ENCODE measurements at regions of chr5 and their contacts with region 1.

Region 1: GRCh38 chr5:14727428-14727865 is 62.9 kb downstream of the OTULIN start:
- DNase-seq: peak; percentile 75
- ATAC-seq: peak; percentile 70
- H3K4me3 Mint-ChIP-seq: no peak overlapping the region
- H3K27ac Mint-ChIP-seq: no peak overlapping the region
- H3K4me1 Mint-ChIP-seq: peaks cover 6% of the 10 kb centered on the region
- H3K27me3 Mint-ChIP-seq: no peaks in the 10 kb centered on the region
- CTCF ChIP-seq: peak; percentile 91

Region 2: GRCh38 chr5:14706615-14707021 is 20.8 kb before region 1 on chr5:
- CTCF ChIA-PET with region 1: interaction called, 28 read pairs
- POLR2A ChIA-PET with region 1: no interaction called
- intact Hi-C with region 1: no loop called
- DNase-seq: peak; percentile 33
- ATAC-seq: peak; percentile 91
- H3K4me3 Mint-ChIP-seq: peak overlapping the region; percentile 46
- H3K27ac Mint-ChIP-seq: peak overlapping the region; percentile 97
- H3K4me1 Mint-ChIP-seq: peaks cover 68% of the 10 kb centered on the region
- H3K27me3 Mint-ChIP-seq: no peaks in the 10 kb centered on the region
- CTCF ChIP-seq: no peak

Region 3: GRCh38 chr5:14743601-14744295 is 16.3 kb after region 1 on chr5:
- CTCF ChIA-PET with region 1: interaction called, 17 read pairs
- POLR2A ChIA-PET with region 1: interaction called, 3 read pairs
- intact Hi-C with region 1: no loop called
- DNase-seq: no peak
- ATAC-seq: no peak
- H3K4me3 Mint-ChIP-seq: no peak overlapping the region
- H3K27ac Mint-ChIP-seq: no peak overlapping the region
- H3K4me1 Mint-ChIP-seq: peaks cover 31% of the 10 kb centered on the region
- H3K27me3 Mint-ChIP-seq: no peaks in the 10 kb centered on the region
- CTCF ChIP-seq: no peak

Region 4: GRCh38 chr5:14757850-14758249 is 30.4 kb after region 1 on chr5:
- CTCF ChIA-PET with region 1: interaction called, 13 read pairs
- POLR2A ChIA-PET with region 1: no interaction called
- intact Hi-C with region 1: no loop called
- DNase-seq: no peak
- ATAC-seq: no peak
- H3K4me3 Mint-ChIP-seq: no peak overlapping the region
- H3K27ac Mint-ChIP-seq: no peak overlapping the region
- H3K4me1 Mint-ChIP-seq: no peaks in the 10 kb centered on the region
- H3K27me3 Mint-ChIP-seq: no peaks in the 10 kb centered on the region
- CTCF ChIP-seq: no peak

Region 5: DNA sequence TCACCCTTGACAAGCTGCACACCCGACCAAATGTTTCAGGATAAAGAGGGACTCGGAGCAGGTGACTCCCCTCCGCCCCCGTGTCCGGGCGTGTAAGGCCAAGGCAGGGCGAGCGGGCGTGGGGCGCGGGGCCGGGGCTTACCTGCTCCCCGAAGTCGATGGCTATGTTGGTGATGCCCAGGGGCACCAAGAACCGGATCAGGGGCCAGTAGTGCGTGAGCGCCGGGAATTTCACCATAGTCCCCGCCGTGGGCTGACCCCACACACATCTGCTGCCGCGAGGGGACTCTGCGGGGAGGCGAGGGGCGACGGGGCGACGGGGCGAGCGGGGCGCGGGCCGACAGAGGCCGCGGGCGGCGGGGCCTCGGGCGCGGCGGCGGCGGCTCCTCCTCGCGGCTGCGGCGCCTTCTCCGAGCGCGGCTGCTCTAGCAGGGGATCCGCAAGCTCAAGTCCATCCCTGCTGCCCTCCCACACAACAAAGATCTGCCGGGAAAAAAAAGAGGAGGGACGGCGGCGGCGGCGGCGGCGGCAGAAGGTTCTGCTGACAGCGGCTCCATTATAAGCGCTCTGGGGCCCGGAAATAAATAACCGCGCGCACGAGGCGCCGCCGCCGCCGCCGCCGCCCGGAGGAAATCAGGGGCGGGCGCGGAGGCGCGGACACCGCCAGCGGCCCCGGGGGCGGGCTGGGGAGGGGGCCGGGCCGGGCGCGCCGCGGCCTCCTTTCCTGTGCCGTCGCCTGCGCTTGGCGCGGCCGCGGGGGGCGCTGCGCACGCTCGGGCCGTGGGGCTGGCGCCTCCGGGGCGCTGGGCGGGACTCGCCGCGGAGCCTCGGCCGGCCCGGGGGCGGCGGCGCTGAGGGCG is 144.0 kb after region 1 on chr5 and contains the start of gene ANKH:
- CTCF ChIA-PET with region 1: interaction called, 15 read pairs
- POLR2A ChIA-PET with region 1: interaction called, 6 read pairs
- intact Hi-C with region 1: loop called (anchors 5 kb)
- DNase-seq: peak; percentile 81
- ATAC-seq: peak; percentile 84
- H3K4me3 Mint-ChIP-seq: peak within 1 kb of the TSS; percentile 90
- H3K27ac Mint-ChIP-seq: peak within 1 kb of the TSS; percentile 90
- H3K4me1 Mint-ChIP-seq: peaks cover 29% of the 10 kb centered on the region
- H3K27me3 Mint-ChIP-seq: no peaks in the 10 kb centered on the region
- CTCF ChIP-seq: no peak
- total RNA-seq, gene ANKH: 85.4 to 87.2 TPM

Region 6: DNA sequence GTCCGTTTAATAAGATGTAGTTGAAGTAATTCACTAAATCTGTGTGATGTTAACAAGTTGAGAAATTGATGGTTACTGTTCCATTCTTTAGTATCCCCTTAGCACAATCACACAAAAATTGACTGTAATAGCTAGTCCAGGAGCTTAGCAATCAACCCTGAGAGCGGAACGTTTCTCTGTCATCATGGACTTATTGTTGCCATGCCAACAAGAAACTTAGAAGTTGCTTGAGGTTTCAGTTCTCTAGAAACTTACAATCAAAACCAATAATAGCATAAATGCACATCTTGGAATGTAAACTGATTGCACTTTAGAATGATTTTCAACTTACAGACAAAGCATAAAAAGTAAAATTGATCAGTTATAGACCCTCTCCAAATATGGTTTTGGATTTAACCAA is 269.6 kb after region 1 on chr5:
- CTCF ChIA-PET with region 1: interaction called, 123 read pairs
- POLR2A ChIA-PET with region 1: interaction called, 3 read pairs
- intact Hi-C with region 1: no loop called
- DNase-seq: no peak
- ATAC-seq: no peak
- H3K4me3 Mint-ChIP-seq: no peak overlapping the region
- H3K27ac Mint-ChIP-seq: no peak overlapping the region
- H3K4me1 Mint-ChIP-seq: peaks cover 24% of the 10 kb centered on the region
- H3K27me3 Mint-ChIP-seq: peaks cover 2% of the 10 kb centered on the region
- CTCF ChIP-seq: no peak

Region 7: DNA sequence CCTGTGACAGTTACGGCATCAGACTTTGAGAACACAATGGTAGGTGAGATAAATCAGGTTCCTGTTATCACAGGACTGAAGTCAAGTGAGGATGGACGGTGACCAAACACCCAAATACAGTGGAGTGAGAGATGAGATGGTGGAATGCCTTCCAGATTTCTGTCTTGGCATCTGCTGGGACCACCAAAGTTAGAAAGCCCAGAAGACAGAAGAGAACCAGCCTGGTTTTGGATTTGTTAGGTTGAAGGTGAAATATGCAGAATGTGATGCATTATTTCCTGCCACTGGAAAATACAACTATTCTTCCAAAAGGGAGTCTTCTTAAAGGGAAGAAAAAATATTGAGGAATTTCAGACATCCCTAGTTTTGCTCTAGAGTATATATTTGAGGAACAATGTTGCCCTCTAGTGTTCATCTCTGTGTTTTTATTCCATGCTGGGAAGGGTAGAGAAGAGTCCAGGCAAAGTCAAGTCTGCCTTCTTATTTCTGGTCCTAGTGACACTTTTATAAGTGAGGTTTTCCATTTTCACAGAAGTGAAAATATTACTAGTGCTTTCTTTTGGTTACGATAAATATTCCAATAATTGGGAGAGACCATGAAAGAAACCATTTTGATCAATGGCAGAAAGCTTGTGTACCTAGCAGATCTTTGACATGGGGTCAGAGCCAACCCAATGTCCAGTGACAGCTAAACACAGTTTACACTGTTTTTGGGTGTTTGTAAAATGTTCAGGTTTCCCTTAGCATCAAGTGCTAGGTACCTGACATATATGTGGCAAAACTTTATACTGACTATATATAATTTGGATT is 286.4 kb after region 1 on chr5:
- CTCF ChIA-PET with region 1: interaction called, 29 read pairs
- POLR2A ChIA-PET with region 1: no interaction called
- intact Hi-C with region 1: no loop called
- DNase-seq: no peak
- ATAC-seq: no peak
- H3K4me3 Mint-ChIP-seq: no peak overlapping the region
- H3K27ac Mint-ChIP-seq: no peak overlapping the region
- H3K4me1 Mint-ChIP-seq: no peaks in the 10 kb centered on the region
- H3K27me3 Mint-ChIP-seq: peaks cover under 1% of the 10 kb centered on the region
- CTCF ChIP-seq: peak; percentile 90